ENCODE measurements at regions of chr1 and their contacts with region 1.

Region 1: DNA sequence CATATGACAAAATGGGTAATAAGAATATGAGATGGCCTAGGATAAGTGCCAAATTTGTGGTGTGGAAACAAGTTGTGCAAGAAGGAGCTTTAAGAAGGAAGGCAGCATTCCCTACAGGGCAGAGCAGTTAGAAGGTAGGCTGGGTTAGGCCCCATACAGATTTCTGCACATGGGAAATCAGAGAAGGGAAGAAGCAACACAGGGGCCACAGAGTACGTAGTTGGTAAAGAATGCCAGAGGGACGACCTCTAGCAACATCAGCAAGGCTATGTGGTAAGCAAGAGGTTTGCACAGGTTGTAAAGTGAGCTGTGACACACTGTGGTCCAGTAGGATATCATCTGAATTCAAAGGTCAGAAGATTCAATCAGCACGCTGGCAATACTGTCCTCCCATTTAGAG is 765.6 kb upstream of the B3GALT2 start:
- DNase-seq: no peak
- ATAC-seq: peak; percentile 17

Region 2: GRCh38 chr1:193190096-193190744 is 761.8 kb before region 1 on chr1:
- intact Hi-C with region 1: loop called (anchors 2 kb)
- DNase-seq: no peak
- ATAC-seq: no peak

Region 3: GRCh38 chr1:193355179-193355578 is 596.8 kb before region 1 on chr1:
- intact Hi-C with region 1: loop called (anchors 10 kb)
- DNase-seq: no peak
- ATAC-seq: no peak

Region 4: GRCh38 chr1:193406901-193407300 is 545.1 kb before region 1 on chr1:
- intact Hi-C with region 1: loop called (anchors 10 kb)
- DNase-seq: no peak
- ATAC-seq: no peak

Region 5: DNA sequence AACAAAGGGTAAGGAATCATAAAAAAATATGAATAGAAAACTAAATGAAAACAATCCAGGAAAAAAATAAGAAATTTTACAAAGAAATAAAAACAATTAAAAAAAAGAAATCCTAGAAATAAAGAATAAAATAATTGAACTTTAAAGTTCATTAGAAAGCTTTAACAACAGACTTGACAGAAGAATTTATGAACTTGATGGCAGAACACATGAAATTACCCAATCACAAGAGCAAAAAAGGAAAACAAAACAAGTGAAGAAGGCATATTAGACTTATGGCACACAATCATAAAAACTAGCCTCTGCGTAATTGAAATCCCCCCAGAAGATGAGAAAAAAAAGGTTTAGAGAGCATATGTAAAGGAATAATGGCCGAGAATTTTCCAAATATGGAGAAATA is 36.9 kb after region 1 on chr1:
- intact Hi-C with region 1: no loop called
- DNase-seq: no peak
- ATAC-seq: no peak

Region 6: DNA sequence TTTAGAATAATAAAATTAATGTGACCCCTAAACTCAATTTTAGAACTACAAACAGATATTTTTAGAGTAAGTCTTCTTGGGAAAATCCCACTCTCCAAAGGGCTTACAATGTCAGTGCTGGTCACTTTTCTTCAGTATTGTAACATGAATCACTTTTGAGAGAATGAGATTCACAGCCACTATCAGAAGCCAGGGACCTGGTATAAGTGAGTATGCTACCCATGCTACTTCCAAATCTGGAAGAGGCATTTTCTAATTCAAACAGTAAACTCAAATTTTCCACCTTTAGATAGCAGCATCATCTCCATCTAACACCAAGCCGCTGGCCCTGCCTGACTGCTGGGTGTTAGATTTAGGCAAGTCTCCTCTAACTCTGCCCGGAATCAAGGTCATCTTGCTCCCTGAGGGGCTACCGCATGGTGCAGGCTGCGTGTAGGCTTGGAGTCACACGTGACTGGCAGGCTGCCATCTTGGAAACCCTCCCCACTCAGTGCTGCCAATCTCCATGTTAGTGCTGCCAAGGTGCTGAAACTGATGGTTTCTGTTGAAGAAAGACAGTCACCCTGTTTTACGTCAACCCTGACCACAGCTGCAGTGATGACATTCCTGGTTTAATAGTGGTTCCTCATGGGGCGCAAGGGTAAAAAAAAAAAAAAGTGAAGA is 117.3 kb after region 1 on chr1:
- intact Hi-C with region 1: loop called (anchors 2 kb)
- DNase-seq: peak; percentile 74
- ATAC-seq: peak; percentile 91